ENCODE measurements at regions of chr10 and their contacts with region 1.

Region 1: DNA sequence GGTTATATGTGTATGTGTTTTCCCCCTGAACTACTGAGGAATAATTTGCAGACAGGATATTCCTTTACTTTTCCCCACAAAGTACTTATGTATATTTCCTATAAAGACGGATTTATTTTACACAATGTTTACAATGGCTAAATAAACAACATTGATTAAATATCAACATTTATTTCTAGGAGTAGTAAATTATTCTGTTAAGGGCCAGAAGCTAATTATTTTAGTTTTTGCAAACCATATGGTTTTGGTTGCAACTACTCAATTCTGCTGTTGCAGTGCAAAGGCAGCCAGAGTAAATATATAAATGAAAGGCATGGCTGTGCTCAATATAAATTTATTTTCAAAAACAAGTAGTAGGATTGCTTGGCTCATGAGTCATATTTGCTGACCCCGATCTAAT is 907.1 kb upstream of the MBL2 start:
- DNase-seq: no peak
- ATAC-seq: no peak
- H3K4me3 ChIP-seq: no peak overlapping the region
- H3K27ac ChIP-seq: no peak overlapping the region
- H3K4me1 ChIP-seq: no peaks in the 10 kb centered on the region
- H3K27me3 ChIP-seq: no peaks in the 10 kb centered on the region
- CTCF ChIP-seq: no peak
- POLR2A ChIP-seq: no peak

Region 2: GRCh38 chr10:53702489-53702888 is 22.8 kb after region 1 on chr10:
- intact Hi-C with region 1: no loop called
- DNase-seq: peak; percentile 32 to 73 (median 53)
- ATAC-seq: peak in 3 of 4 donors; percentile 53 to 62 (median 60)
- H3K4me3 ChIP-seq: no peak overlapping the region
- H3K27ac ChIP-seq: no peak overlapping the region
- H3K4me1 ChIP-seq: peaks cover 0 to 7% (median 0%) of the 10 kb centered on the region in 12 donors
- H3K27me3 ChIP-seq: no peaks in the 10 kb centered on the region
- CTCF ChIP-seq: no peak
- POLR2A ChIP-seq: no peak

Region 3: GRCh38 chr10:53864846-53865245 is 185.2 kb after region 1 on chr10:
- intact Hi-C with region 1: loop called in 1 of 10 experiments (anchors 10 kb)
- DNase-seq: no peak
- ATAC-seq: no peak
- H3K4me3 ChIP-seq: no peak overlapping the region
- H3K27ac ChIP-seq: no peak overlapping the region
- H3K4me1 ChIP-seq: no peaks in the 10 kb centered on the region
- H3K27me3 ChIP-seq: no peaks in the 10 kb centered on the region
- CTCF ChIP-seq: no peak
- POLR2A ChIP-seq: no peak

Measured in heart left ventricle (tissue), 16 donors.